HCT116 (cell line): ENCODE measurements at regions of chr1 and their contacts with region 1.

Region 1: GRCh38 chr1:156338180-156338973 is at the starts of genes CCT3 and TSACC:
- DNase-seq: peak; percentile 100
- ATAC-seq: peak; percentile 92
- H3K4me3 ChIP-seq: peak within 1 kb of the TSS; percentile 75 to 98
- H3K27ac ChIP-seq: peak within 1 kb of the TSS; percentile 78
- H3K4me1 ChIP-seq: peaks cover 7 to 22% of the 10 kb centered on the region in 2 experiments
- H3K27me3 ChIP-seq: no peaks in the 10 kb centered on the region
- CTCF ChIP-seq: no peak
- POLR2A ChIP-seq: peak; percentile 93
- RAD21 ChIP-seq: no peak
- total RNA-seq, gene CCT3: 619 TPM
- total RNA-seq, gene TSACC: 1.0 TPM

Region 2: GRCh38 chr1:156053770-156054499 is 284.4 kb before region 1 on chr1 and contains the start of gene UBQLN4:
- CTCF ChIA-PET with region 1: no interaction called
- POLR2A ChIA-PET with region 1: no interaction called
- RAD21 ChIA-PET with region 1: no interaction called
- intact Hi-C with region 1: no loop called
- DNase-seq: peak; percentile 67
- ATAC-seq: peak; percentile 62
- H3K4me3 ChIP-seq: peak within 1 kb of the TSS; percentile 89 to 95
- H3K27ac ChIP-seq: peak within 1 kb of the TSS; percentile 92
- H3K4me1 ChIP-seq: peaks cover 6 to 24% of the 10 kb centered on the region in 2 experiments; a peak in 3 of 4 replicates
- H3K27me3 ChIP-seq: no peaks in the 10 kb centered on the region
- CTCF ChIP-seq: peak in 2 of 3 experiments; percentile 39 to 53; a peak in 3 of 6 replicates
- POLR2A ChIP-seq: no peak
- RAD21 ChIP-seq: no peak
- total RNA-seq, gene UBQLN4: 68.4 TPM

Region 3: DNA sequence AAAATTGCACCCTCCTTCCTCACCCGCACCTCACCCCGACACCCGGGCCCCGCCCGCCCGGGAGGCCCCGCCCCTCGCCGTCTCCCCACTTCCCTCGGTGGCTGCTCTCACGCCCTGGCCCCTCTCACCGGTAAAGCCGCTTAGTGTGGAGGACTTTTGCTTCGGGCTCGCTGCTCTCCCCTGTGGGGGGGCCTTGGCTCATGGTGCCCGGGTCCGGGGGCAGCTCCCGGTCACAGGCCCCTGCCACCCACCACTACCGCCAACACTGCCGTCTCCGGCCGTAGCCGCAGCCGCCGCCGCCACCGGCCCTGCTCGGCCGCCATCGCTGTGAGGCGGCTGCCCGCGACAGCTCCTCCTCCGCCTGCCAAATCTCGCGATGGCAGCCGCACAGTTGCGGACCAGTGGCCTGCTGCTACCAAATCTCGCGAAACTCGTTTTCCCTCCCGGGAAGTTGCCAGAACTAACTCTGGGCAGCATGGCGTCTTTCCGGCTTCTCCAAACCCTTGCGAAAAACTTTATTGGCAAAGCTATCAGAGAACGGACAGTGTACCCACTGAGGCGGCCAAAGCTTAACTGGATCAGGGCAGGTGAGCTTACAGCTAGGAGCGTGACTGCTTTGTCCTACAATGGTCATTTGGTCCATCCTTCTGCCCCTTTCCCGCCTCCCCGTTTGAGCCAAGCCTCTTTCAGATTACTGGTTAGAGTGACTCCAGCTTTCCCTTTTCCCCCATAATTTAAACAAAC is 55.7 kb before region 1 on chr1 and contains the start of gene SMG5:
- CTCF ChIA-PET with region 1: no interaction called
- POLR2A ChIA-PET with region 1: no interaction called
- RAD21 ChIA-PET with region 1: no interaction called
- intact Hi-C with region 1: loop called (anchors 2 kb)
- DNase-seq: peak; percentile 98
- ATAC-seq: peak; percentile 92
- H3K4me3 ChIP-seq: peak within 1 kb of the TSS; percentile 77 to 96
- H3K27ac ChIP-seq: peak within 1 kb of the TSS; percentile 90
- H3K4me1 ChIP-seq: peaks cover 25 to 27% of the 10 kb centered on the region in 2 experiments
- H3K27me3 ChIP-seq: no peaks in the 10 kb centered on the region
- CTCF ChIP-seq: no peak
- POLR2A ChIP-seq: peak; percentile 74
- RAD21 ChIP-seq: no peak
- total RNA-seq, gene SMG5: 75.2 TPM

Region 4: DNA sequence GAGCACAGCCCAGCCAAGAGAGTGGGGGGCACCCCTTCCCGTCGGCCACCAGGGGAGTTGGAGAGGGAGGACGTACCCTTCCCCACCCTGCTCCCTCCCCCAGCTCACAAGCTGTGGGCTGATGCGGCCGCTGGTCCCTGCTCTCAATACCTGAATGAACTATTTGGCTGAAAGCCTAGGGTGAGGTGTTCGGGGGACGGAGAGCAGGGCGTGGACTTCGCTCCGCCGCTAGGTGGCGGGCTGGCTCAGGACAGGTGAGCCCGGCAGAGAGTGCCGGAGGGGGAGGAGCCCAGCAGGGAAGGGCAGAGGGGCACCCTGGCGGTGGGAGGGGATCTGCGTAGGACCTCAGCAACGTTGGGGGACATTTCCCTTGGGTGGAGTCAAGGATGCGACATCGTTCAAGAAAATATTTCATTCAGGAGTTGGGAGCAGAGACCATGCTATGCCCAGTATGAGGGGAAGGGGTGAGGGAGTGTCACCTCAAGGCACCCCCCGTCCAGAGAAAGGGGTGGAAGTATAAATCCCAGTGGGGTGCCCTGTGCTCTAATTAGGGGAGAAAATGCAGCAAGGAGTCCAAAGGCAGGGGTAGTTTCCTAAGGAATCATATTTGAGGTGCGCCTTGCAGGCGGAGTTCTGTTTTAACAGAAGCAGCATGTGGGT is 18.6 kb after region 1 on chr1:
- CTCF ChIA-PET with region 1: interaction called, 3 read pairs
- POLR2A ChIA-PET with region 1: interaction called, 3 read pairs
- RAD21 ChIA-PET with region 1: no interaction called
- intact Hi-C with region 1: loop called (anchors 2 kb)
- DNase-seq: peak; percentile 69
- ATAC-seq: peak; percentile 96
- H3K4me3 ChIP-seq: peak overlapping the region; percentile 30 to 43
- H3K27ac ChIP-seq: no peak overlapping the region
- H3K4me1 ChIP-seq: peaks cover 13 to 17% of the 10 kb centered on the region in 2 experiments; a peak in 3 of 4 replicates
- H3K27me3 ChIP-seq: no peaks in the 10 kb centered on the region
- CTCF ChIP-seq: peak; percentile 88 to 97 (median 95)
- POLR2A ChIP-seq: no peak
- RAD21 ChIP-seq: peak; percentile 73